Activated naive CD4-positive, alpha-beta T cell treated with anti-CD3 and anti-CD28 coated beads for 36 hours (primary cell): ENCODE measurements at regions of chr12 and their contacts with region 1.

Region 1: DNA sequence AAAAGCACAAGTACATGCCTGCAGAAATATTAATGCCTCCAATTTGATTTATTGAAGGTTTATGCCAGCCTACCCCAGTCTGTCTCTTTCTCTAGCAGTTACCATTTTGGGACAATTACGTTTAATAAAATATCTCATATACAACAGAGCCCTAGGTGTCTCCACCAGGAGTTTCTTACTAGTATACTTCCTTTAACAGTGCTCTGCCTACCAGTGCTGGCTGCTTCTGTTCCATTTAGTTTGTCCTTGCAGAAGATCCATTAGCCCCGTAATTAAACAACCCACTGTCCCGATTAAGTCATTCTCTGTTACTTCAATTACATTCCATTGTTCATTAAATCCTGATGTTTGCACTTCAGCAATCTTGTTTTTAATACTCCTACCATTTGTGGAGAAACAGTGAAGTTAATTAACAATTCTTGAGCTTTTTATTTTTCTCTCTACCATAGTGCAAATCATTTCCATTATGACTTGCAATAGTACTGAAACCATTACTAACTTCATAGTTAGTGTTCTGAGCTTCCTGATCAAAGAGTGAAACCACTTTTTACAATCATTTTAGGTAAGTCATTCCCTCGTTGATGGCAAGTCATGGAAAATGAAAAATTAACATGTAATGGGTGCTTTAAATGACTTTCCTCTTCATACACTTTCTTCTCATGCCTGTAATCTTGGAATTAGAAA is 121.1 kb downstream of the PLXNC1 start:
- DNase-seq: no peak
- H3K4me3 Mint-ChIP-seq: no peak overlapping the region
- H3K27ac Mint-ChIP-seq: peak overlapping the region; percentile 30
- H3K4me1 Mint-ChIP-seq: peaks cover 46% of the 10 kb centered on the region
- H3K27me3 Mint-ChIP-seq: no peaks in the 10 kb centered on the region

Region 2: GRCh38 chr12:94244165-94245133 is 25.0 kb before region 1 on chr12:
- CTCF ChIA-PET with region 1: no interaction called
- intact Hi-C with region 1: loop called (anchors 1 kb)
- DNase-seq: peak; percentile 67
- H3K4me3 Mint-ChIP-seq: no peak overlapping the region
- H3K27ac Mint-ChIP-seq: peak overlapping the region; percentile 52
- H3K4me1 Mint-ChIP-seq: peaks cover 14% of the 10 kb centered on the region
- H3K27me3 Mint-ChIP-seq: no peaks in the 10 kb centered on the region

Region 3: GRCh38 chr12:94326727-94327126 is 57.3 kb after region 1 on chr12:
- CTCF ChIA-PET with region 1: no interaction called
- intact Hi-C with region 1: loop called (anchors 2 kb)
- DNase-seq: no peak
- H3K4me3 Mint-ChIP-seq: no peak overlapping the region
- H3K27ac Mint-ChIP-seq: no peak overlapping the region
- H3K4me1 Mint-ChIP-seq: peaks cover 9% of the 10 kb centered on the region
- H3K27me3 Mint-ChIP-seq: no peaks in the 10 kb centered on the region

Region 4: GRCh38 chr12:94427501-94428381 is 158.3 kb after region 1 on chr12:
- CTCF ChIA-PET with region 1: no interaction called
- intact Hi-C with region 1: loop called (anchors 2 kb)
- DNase-seq: peak; percentile 45
- H3K4me3 Mint-ChIP-seq: peak overlapping the region; percentile 28
- H3K27ac Mint-ChIP-seq: peak overlapping the region; percentile 63
- H3K4me1 Mint-ChIP-seq: peaks cover 34% of the 10 kb centered on the region
- H3K27me3 Mint-ChIP-seq: no peaks in the 10 kb centered on the region